A549 (cell line): ENCODE measurements at regions of chr1 and their contacts with region 1.

Region 1: GRCh38 chr1:156456622-156457465 is 43.7 kb downstream of the MEF2D start:
- DNase-seq: peak; percentile 99
- ATAC-seq: peak; percentile 80 to 90
- H3K4me3 ChIP-seq: peak overlapping the region; percentile 60
- H3K27ac ChIP-seq: peak overlapping the region; percentile 97 to 98
- H3K4me1 ChIP-seq: peaks cover 13% of the 10 kb centered on the region
- CTCF ChIP-seq: no peak
- EP300 ChIP-seq: no peak
- POLR2A ChIP-seq: peak; percentile 89
- RAD21 ChIP-seq: no peak

Region 2: DNA sequence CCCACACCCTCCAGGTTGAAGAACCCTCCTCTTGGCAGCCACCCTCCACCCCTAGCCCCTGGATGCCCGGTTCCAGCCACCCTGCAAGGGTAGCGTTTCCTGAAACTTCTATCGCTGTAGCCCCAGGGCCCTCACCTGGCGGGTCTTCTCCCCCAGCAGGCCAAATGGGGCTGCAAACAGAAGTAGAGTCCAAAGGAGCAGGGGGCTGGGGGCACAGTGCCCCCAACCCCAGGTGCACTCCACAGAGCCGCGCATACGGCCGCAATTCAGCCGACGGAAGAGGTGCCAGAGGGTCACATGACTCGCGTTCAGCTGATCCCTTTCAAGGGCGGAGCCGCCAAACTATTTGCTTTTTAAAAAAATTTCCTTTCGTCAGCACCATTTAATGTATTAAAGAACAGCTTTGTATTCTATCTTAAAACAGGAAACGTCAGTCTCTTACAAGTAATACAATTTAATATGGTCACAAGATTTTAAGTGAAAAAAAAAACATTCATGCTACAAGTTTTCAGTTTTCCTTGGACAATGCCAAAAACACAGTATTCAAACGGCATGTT is 161.4 kb before region 1 on chr1 and contains the start of gene GLMP:
- CTCF ChIA-PET with region 1: no interaction called
- POLR2A ChIA-PET with region 1: no interaction called
- DNase-seq: peak; percentile 64 to 66
- ATAC-seq: peak; percentile 62 to 68
- H3K4me3 ChIP-seq: peak within 1 kb of the TSS; percentile 71
- H3K27ac ChIP-seq: peak within 1 kb of the TSS; percentile 80 to 89
- H3K4me1 ChIP-seq: peaks cover 4% of the 10 kb centered on the region; the same call in 2 of the 3 replicates
- CTCF ChIP-seq: no peak
- EP300 ChIP-seq: no peak
- POLR2A ChIP-seq: peak; percentile 62
- RAD21 ChIP-seq: no peak
- polyA plus RNA-seq, gene GLMP: 12.4 and 16.9 TPM in 2 replicates

Region 3: GRCh38 chr1:156471496-156472490 is 14.9 kb after region 1 on chr1:
- CTCF ChIA-PET with region 1: interaction called, 12 read pairs
- POLR2A ChIA-PET with region 1: interaction called, 11 read pairs
- DNase-seq: peak in 1 of 2 experiments; percentile 50
- ATAC-seq: peak; percentile 16 to 40; a peak in 4 of 6 replicates
- H3K4me3 ChIP-seq: no peak overlapping the region
- H3K27ac ChIP-seq: peak overlapping the region; percentile 21 to 52; a peak in 4 of 6 replicates
- H3K4me1 ChIP-seq: peaks cover 31% of the 10 kb centered on the region
- CTCF ChIP-seq: no peak
- EP300 ChIP-seq: no peak
- POLR2A ChIP-seq: no peak
- RAD21 ChIP-seq: no peak

Region 4: DNA sequence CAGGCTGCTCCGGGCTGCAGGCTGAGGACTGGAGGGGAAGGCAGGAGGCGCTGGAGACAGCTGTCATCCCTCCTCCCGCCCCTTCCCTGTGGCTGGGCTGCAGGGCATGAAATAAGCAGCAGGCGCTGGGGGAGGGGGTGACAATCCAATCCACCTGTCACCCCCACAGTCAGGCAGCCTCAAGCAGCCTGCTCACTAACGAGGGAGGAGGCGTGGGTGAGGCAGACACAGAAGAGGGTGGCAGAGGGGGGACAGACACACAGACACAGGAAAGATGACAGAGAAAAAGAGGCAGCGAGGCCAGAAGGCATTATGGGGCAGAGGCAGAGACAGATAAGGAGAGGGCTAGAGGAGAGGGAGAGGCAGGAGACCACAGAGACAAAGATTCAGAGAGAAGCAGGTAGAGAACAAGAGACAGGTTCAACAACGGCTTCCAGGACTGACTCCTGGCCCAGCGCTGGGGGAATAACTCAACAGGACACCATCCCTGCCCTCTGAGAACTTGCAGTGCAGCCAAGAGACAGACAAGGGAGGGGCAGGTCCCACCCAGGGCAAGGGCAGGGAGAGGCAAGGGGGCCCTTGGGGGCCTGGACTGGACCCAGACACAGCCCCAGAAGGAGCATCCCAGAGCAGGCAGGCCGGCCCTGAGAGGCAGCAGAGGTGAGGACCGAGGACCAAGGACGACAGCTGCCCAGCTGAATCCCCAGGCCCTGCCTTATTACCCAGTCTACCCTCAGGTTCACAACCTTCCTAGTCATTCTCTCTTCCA is 32.5 kb after region 1 on chr1:
- CTCF ChIA-PET with region 1: interaction called, 13 read pairs
- POLR2A ChIA-PET with region 1: interaction called, 9 read pairs
- DNase-seq: no peak
- ATAC-seq: peak; percentile 3 to 31; a peak in 3 of 6 replicates
- H3K4me3 ChIP-seq: no peak overlapping the region
- H3K27ac ChIP-seq: peak overlapping the region; percentile 48 to 75; a peak in 3 of 6 replicates
- H3K4me1 ChIP-seq: peaks cover 64% of the 10 kb centered on the region
- CTCF ChIP-seq: no peak
- EP300 ChIP-seq: no peak
- POLR2A ChIP-seq: no peak
- RAD21 ChIP-seq: no peak

Region 5: DNA sequence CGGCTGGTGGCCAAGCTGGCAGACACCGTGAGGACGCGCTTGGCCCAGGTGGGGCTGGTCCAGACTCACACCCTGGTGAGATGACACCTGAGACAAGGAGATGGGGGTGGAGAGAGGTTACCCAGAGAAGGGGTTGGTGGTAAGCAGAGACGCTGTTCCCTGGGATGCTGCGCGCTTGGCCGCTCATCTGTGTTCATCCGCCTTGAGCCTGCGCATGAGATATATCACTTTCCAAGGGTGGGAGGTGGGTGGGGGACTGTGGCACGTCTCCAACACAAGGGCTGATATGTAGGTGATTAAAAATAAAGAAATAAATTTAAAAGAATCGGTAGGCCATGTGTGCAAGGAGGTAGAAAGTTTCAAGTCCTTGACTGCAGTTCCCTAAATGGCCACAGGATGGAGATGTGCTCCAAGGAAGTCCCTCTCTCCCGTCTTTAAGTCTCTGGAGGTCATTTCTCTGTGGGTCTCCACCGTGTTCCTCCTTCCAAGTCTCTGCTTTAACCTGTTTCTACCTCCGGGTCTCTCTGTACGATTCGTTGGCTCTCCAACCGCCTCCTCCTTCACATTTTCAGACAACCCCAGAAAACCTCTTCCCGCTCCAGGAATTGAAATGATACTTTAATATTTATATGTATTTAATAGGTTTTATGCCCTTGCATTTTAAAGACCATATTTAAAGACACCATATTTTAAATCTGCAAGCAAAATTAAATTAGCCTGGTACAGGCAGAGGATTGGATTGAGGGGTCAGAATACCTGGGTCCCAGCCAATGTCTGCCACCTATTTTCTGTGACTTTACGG is 127.2 kb after region 1 on chr1:
- CTCF ChIA-PET with region 1: interaction called, 11 read pairs
- POLR2A ChIA-PET with region 1: no interaction called
- DNase-seq: peak; percentile 85 to 88
- ATAC-seq: peak; percentile 67 to 80
- H3K4me3 ChIP-seq: no peak overlapping the region
- H3K27ac ChIP-seq: peak overlapping the region in 1 of 2 experiments; percentile 60; a peak in 3 of 6 replicates
- H3K4me1 ChIP-seq: 0 out of 3 replicates have a peak, but pooled peaks cover 4% of the 10 kb centered on the region
- CTCF ChIP-seq: peak; percentile 82
- EP300 ChIP-seq: no peak
- POLR2A ChIP-seq: no peak
- RAD21 ChIP-seq: peak; percentile 78 to 85

Region 6: GRCh38 chr1:156601122-156601830 is 144.4 kb after region 1 on chr1 and contains the start of gene GPATCH4:
- CTCF ChIA-PET with region 1: interaction called, 5 read pairs
- POLR2A ChIA-PET with region 1: interaction called, 10 read pairs
- DNase-seq: peak; percentile 89 to 92
- ATAC-seq: peak; percentile 86 to 87
- H3K4me3 ChIP-seq: peak within 1 kb of the TSS; percentile 77
- H3K27ac ChIP-seq: peak within 1 kb of the TSS; percentile 86 to 94
- H3K4me1 ChIP-seq: peaks cover 19% of the 10 kb centered on the region
- CTCF ChIP-seq: no peak
- EP300 ChIP-seq: no peak
- POLR2A ChIP-seq: peak; percentile 87
- RAD21 ChIP-seq: no peak
- polyA plus RNA-seq, gene GPATCH4: 68.1 and 76.1 TPM in 2 replicates